Endothelial cell of umbilical vein (primary cell): ENCODE measurements at regions of chr9 and their contacts with region 1.

Region 1: GRCh38 chr9:77841739-77842386 is 189.7 kb downstream of the GNAQ start:
- DNase-seq: peak; percentile 38
- H3K4me3 ChIP-seq: no peak overlapping the region
- H3K27ac ChIP-seq: no peak overlapping the region
- H3K4me1 ChIP-seq: peaks cover 73% of the 10 kb centered on the region
- H3K27me3 ChIP-seq: no peaks in the 10 kb centered on the region
- CTCF ChIP-seq: peak; percentile 12 to 26
- POLR2A ChIP-seq: no peak

Region 2: GRCh38 chr9:77743386-77743785 is 98.5 kb before region 1 on chr9:
- CTCF ChIA-PET with region 1: no interaction called
- POLR2A ChIA-PET with region 1: no interaction called
- dilution Hi-C with region 1: no loop called
- intact Hi-C with region 1: no loop called
- DNase-seq: no peak
- H3K4me3 ChIP-seq: no peak overlapping the region
- H3K27ac ChIP-seq: no peak overlapping the region
- H3K4me1 ChIP-seq: no peaks in the 10 kb centered on the region
- H3K27me3 ChIP-seq: no peaks in the 10 kb centered on the region
- CTCF ChIP-seq: no peak
- POLR2A ChIP-seq: no peak

Region 3: GRCh38 chr9:77820293-77820954 is 21.4 kb before region 1 on chr9:
- CTCF ChIA-PET with region 1: interaction called, 12 read pairs
- POLR2A ChIA-PET with region 1: no interaction called
- dilution Hi-C with region 1: no loop called
- intact Hi-C with region 1: loop called (anchors 2 kb)
- DNase-seq: peak; percentile 59
- H3K4me3 ChIP-seq: no peak overlapping the region
- H3K27ac ChIP-seq: peak overlapping the region; percentile 52
- H3K4me1 ChIP-seq: peaks cover 28% of the 10 kb centered on the region
- H3K27me3 ChIP-seq: no peaks in the 10 kb centered on the region
- CTCF ChIP-seq: no peak
- POLR2A ChIP-seq: no peak

Region 4: DNA sequence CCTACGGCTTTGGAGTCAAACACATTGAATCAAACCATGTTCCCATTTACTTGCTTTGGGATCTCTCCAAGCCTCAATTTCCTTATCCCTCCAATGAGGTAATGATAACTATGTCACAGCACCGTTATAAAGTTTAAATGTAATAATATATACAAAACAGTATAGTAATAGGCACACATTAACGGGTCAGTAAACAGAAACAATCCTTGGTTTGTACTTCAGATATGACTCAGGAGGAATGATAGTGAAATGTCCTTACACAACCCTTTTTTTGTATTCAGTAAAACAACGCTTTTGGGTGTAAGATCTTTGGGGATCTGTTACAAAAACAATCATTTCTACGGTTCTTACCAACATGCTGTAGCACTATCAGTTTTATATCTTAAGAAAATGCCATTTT is 15.2 kb before region 1 on chr9:
- CTCF ChIA-PET with region 1: interaction called, 12 read pairs
- POLR2A ChIA-PET with region 1: no interaction called
- dilution Hi-C with region 1: no loop called
- intact Hi-C with region 1: loop called (anchors 2 kb)
- DNase-seq: no peak
- H3K4me3 ChIP-seq: no peak overlapping the region
- H3K27ac ChIP-seq: no peak overlapping the region
- H3K4me1 ChIP-seq: peaks cover 10% of the 10 kb centered on the region
- H3K27me3 ChIP-seq: no peaks in the 10 kb centered on the region
- CTCF ChIP-seq: no peak
- POLR2A ChIP-seq: no peak

Region 5: GRCh38 chr9:77896938-77897667 is 55.2 kb after region 1 on chr9:
- CTCF ChIA-PET with region 1: interaction called, 10 read pairs
- POLR2A ChIA-PET with region 1: no interaction called
- dilution Hi-C with region 1: no loop called
- intact Hi-C with region 1: no loop called
- DNase-seq: peak; percentile 52
- H3K4me3 ChIP-seq: no peak overlapping the region
- H3K27ac ChIP-seq: no peak overlapping the region
- H3K4me1 ChIP-seq: peaks cover 12% of the 10 kb centered on the region
- H3K27me3 ChIP-seq: no peaks in the 10 kb centered on the region
- CTCF ChIP-seq: peak; percentile 18 to 40
- POLR2A ChIP-seq: no peak

Region 6: DNA sequence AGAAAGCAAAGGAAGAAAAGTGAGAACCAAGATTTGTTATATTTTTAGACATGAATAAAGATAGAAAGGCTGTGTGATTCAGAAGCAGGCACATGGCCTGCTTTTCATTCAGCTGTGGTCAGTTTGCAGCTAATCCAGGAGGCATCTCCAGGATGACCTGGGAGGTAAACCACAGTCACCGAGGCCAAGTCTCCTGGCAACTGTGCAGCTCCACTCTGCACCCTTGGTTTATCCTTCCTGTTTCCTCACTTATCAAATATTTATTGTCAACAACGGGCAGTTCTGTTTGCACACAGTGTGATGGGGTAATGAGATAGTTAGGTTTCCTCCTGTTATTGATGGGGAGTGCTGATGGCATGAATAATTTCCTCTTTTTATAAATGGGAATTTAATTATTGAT is 698.0 kb after region 1 on chr9:
- CTCF ChIA-PET with region 1: no interaction called
- POLR2A ChIA-PET with region 1: no interaction called
- dilution Hi-C with region 1: no loop called
- intact Hi-C with region 1: no loop called
- DNase-seq: no peak
- H3K4me3 ChIP-seq: no peak overlapping the region
- H3K27ac ChIP-seq: no peak overlapping the region
- H3K4me1 ChIP-seq: no peaks in the 10 kb centered on the region
- H3K27me3 ChIP-seq: no peaks in the 10 kb centered on the region
- CTCF ChIP-seq: no peak
- POLR2A ChIP-seq: no peak